Activated naive CD4-positive, alpha-beta T cell treated with anti-CD3 and anti-CD28 coated beads for 36 hours (primary cell): ENCODE measurements at regions of chr5 and their contacts with region 1.

Region 1: DNA sequence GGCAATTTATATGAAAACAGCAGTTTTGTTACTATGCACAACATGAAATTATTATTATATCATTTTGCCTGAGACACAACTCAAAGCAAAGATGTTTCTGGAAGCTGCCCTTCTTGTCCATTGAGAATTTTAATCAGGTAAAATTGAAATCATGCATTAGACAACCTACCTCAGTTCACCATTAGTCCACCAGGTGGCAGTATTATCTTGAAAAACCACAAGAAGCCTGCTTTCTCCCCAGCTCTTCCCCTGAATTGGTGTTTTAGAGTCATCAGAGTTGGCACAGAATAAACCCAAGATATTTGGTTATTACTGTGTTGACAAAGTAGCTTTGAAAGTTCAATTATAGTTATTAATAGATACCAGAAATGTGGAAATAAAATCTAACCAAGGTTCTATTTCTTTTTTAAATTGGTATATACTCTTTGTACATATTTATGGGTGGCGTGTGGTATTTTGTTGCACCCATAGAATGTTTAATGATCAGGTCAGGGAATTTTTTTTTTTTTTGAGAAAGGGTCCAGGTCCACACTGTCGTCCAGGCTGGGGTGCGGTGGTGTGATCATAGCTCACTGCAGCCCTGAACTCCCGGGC is 25.7 kb downstream of the UTP15 start:
- DNase-seq: peak; percentile 63
- H3K4me3 Mint-ChIP-seq: no peak overlapping the region
- H3K27ac Mint-ChIP-seq: no peak overlapping the region
- H3K4me1 Mint-ChIP-seq: no peaks in the 10 kb centered on the region
- H3K27me3 Mint-ChIP-seq: no peaks in the 10 kb centered on the region

Region 2: DNA sequence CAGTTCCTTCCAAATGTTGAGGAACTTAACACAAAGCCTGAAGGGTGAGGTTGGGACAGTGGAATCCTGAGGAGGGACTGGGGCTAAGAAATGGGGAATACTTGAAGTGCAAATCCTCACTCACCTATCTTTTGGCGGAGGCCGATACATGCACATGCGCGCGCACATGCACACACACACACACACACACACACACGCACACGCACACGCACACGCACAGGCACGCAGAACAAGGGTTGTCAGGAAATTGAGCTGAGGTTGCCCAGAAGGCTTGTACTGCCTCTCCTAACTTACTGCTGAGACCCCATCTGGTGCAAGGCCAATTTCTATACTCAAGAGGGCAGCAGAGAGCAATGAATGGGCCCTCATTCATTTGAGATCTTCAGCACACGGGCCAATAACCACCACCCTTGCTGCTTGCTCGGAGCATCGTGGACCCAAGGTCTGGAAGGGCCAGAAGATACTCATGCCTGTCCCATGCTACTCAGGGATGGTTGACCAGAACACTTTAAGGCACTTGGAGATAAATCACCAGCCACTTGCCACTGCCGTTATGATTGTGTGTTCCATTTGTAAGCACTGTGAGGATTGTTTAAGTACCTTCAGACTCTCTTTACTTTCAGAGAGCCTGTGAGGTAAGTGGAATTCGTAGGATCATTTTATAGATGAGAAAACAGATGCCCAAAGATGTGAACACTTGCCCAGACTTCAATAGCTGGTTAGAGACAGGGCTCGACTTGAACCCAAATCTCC is 71.5 kb before region 1 on chr5:
- CTCF ChIA-PET with region 1: interaction called, 11 read pairs
- intact Hi-C with region 1: loop called (anchors 1 kb)
- DNase-seq: peak; percentile 82
- H3K4me3 Mint-ChIP-seq: no peak overlapping the region
- H3K27ac Mint-ChIP-seq: no peak overlapping the region
- H3K4me1 Mint-ChIP-seq: peaks cover 2% of the 10 kb centered on the region
- H3K27me3 Mint-ChIP-seq: no peaks in the 10 kb centered on the region

Region 3: GRCh38 chr5:73623901-73624404 is 32.8 kb after region 1 on chr5:
- CTCF ChIA-PET with region 1: interaction called, 11 read pairs
- intact Hi-C with region 1: no loop called
- DNase-seq: no peak
- H3K4me3 Mint-ChIP-seq: no peak overlapping the region
- H3K27ac Mint-ChIP-seq: no peak overlapping the region
- H3K4me1 Mint-ChIP-seq: no peaks in the 10 kb centered on the region
- H3K27me3 Mint-ChIP-seq: peaks cover 45% of the 10 kb centered on the region

Region 4: GRCh38 chr5:73722231-73722630 is 131.0 kb after region 1 on chr5:
- CTCF ChIA-PET with region 1: no interaction called
- intact Hi-C with region 1: no loop called
- DNase-seq: no peak
- H3K4me3 Mint-ChIP-seq: no peak overlapping the region
- H3K27ac Mint-ChIP-seq: no peak overlapping the region
- H3K4me1 Mint-ChIP-seq: no peaks in the 10 kb centered on the region
- H3K27me3 Mint-ChIP-seq: peaks cover 20% of the 10 kb centered on the region

Region 5: GRCh38 chr5:73792687-73793320 is 201.6 kb after region 1 on chr5:
- CTCF ChIA-PET with region 1: interaction called, 155 read pairs
- intact Hi-C with region 1: loop called (anchors 1 kb)
- DNase-seq: peak; percentile 80
- H3K4me3 Mint-ChIP-seq: no peak overlapping the region
- H3K27ac Mint-ChIP-seq: no peak overlapping the region
- H3K4me1 Mint-ChIP-seq: peaks cover 9% of the 10 kb centered on the region
- H3K27me3 Mint-ChIP-seq: peaks cover 30% of the 10 kb centered on the region

Region 6: GRCh38 chr5:74648835-74649293 is 1057.7 kb after region 1 on chr5:
- CTCF ChIA-PET with region 1: no interaction called
- intact Hi-C with region 1: loop called (anchors 2 kb)
- DNase-seq: peak; percentile 18
- H3K4me3 Mint-ChIP-seq: no peak overlapping the region
- H3K27ac Mint-ChIP-seq: no peak overlapping the region
- H3K4me1 Mint-ChIP-seq: no peaks in the 10 kb centered on the region
- H3K27me3 Mint-ChIP-seq: peaks cover 3% of the 10 kb centered on the region